ENCODE measurements at regions of chr1 and their contacts with region 1.

Region 1: GRCh38 chr1:39026051-39026865 is at the start of gene NDUFS5:
- DNase-seq: peak; percentile 60
- H3K4me3 ChIP-seq: peak within 1 kb of the TSS; percentile 59
- H3K27me3 ChIP-seq: no peaks in the 10 kb centered on the region
- CTCF ChIP-seq: no peak
- polyA plus RNA-seq, gene NDUFS5: 223 and 632 TPM in 2 replicates

Region 2: DNA sequence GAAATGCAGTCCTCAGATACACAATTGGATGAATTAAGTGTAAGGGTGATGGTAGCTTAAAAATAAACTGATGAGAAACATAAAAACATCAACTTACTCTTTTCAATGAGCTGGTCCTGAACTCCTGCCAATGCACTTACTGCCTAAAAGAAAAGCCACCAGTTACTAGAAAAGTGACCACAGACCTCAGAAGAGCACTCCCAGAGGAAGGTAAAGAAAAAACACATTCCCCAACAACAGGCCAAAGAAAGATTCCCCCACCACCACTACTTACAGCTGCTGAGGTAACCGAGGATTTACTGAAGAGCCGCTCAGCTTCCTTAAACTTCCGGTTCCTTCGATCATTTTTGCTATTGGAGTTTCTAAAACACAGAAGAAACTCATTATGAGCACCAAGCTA is 1517.1 kb before region 1 on chr1:
- CTCF ChIA-PET with region 1: no interaction called
- POLR2A ChIA-PET with region 1: interaction called, 10 read pairs
- DNase-seq: no peak
- H3K4me3 ChIP-seq: no peak overlapping the region
- H3K27me3 ChIP-seq: no peaks in the 10 kb centered on the region
- CTCF ChIP-seq: 0 out of 2 replicates have a peak, but pooled peaks have one; percentile 26

Region 3: GRCh38 chr1:38997034-38997900 is 29.0 kb before region 1 on chr1:
- CTCF ChIA-PET with region 1: no interaction called
- POLR2A ChIA-PET with region 1: interaction called, 10 read pairs
- DNase-seq: no peak
- H3K4me3 ChIP-seq: no peak overlapping the region
- H3K27me3 ChIP-seq: no peaks in the 10 kb centered on the region
- CTCF ChIP-seq: no peak